ENCODE measurements at regions of chr20 and their contacts with region 1.

Region 1: DNA sequence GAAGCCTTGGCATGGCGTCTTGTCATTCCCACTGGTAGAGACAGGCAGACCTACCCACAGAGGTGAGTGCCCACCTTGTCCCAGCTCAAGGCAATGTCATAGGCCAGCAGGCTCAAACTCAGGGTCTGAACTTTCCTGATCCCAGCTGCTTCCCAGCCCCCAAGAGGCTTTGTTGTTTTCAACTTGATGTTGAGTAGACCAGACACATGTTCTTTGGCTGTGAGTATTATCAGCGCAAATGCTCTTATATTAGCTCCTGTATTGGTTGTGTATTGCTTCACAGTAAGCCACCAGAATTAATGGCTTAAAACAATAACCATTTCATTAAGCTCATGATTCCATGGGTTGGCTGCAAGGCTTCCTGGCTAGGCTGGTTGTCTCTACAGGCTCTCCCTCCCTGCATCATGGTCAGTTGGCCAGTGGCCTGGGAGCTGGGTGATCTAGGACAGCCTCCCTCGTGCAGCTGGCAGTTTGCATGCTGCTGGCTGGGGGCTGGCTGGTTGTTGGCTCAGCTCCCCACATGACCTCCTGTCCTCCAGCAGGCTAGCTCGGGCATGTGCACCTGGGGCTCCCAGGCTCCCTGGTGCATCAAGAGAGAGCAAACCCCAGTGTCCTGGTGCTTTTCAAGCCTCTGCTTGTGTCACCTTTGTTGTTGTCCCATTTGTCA is 21.6 kb downstream of the TOX2 start:
- DNase-seq: no peak
- ATAC-seq: no peak
- H3K4me3 ChIP-seq: no peak overlapping the region
- H3K4me3 Mint-ChIP-seq: no peak overlapping the region
- H3K27ac ChIP-seq: no peak overlapping the region
- H3K27ac Mint-ChIP-seq: no peak overlapping the region
- H3K4me1 ChIP-seq: peaks cover 30% of the 10 kb centered on the region
- H3K4me1 Mint-ChIP-seq: peaks cover 43% of the 10 kb centered on the region
- H3K27me3 ChIP-seq: peaks cover 0 to 4% of the 10 kb centered on the region in 2 experiments
- H3K27me3 Mint-ChIP-seq: no peaks in the 10 kb centered on the region
- CTCF ChIP-seq: no peak

Region 2: DNA sequence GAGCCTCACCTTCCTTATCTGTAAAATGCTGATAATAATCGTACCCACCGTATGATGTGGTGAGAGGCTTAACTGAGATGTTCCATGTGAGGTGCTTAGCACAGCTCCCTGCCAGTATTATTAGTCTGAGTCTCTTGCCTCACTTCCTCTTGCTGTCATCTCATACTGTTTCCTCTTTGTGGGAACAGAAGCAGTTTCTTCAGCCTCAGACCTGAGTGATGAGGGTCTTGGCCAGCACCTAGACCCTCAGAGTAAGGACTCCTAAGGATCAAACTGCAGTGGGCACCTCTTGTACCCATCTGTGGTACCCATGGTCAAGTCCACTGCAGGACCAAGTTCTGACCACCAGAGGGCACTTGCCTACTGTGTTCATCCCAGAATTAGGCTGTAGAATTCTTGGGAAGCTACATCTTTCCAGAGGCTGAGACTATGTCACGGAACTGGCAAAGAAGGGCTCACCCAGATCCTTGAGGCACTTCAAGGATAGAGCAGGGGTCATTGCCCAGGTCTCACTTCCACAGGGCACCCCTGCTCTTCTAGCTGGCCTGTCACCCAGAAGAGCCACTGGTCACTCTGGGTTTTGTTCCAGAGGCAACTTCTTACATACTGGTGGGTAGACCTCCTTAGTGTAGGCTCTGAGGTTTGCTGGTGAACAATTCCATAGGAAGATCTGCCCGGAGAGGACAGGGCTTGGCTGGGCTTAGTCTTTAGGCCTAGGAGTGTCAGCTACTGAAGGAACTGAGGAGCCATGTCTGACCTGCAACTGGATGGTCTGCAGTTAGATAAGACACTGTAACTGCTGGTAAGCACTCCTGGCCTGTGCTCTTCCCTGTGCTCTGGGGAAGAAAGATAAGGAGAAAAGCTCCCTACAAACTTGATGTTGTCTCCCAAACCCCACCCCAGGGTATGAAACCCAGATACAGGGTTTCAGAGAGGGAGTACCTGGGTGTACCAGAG is 398.0 kb before region 1 on chr20:
- CTCF ChIA-PET with region 1: no interaction called
- POLR2A ChIA-PET with region 1: no interaction called
- intact Hi-C with region 1: no loop called
- DNase-seq: peak; percentile 16 to 62 (median 30)
- ATAC-seq: peak; percentile 56
- H3K4me3 ChIP-seq: no peak overlapping the region
- H3K4me3 Mint-ChIP-seq: no peak overlapping the region
- H3K27ac ChIP-seq: no peak overlapping the region
- H3K27ac Mint-ChIP-seq: no peak overlapping the region
- H3K4me1 ChIP-seq: no peaks in the 10 kb centered on the region
- H3K4me1 Mint-ChIP-seq: no peaks in the 10 kb centered on the region
- H3K27me3 ChIP-seq: no peaks in the 10 kb centered on the region
- H3K27me3 Mint-ChIP-seq: no peaks in the 10 kb centered on the region
- CTCF ChIP-seq: peak; percentile 92

Region 3: GRCh38 chr20:43749734-43750294 is 186.4 kb before region 1 on chr20:
- CTCF ChIA-PET with region 1: no interaction called
- POLR2A ChIA-PET with region 1: no interaction called
- intact Hi-C with region 1: no loop called
- DNase-seq: peak; percentile 54 to 92 (median 80)
- ATAC-seq: peak; percentile 84
- H3K4me3 ChIP-seq: no peak overlapping the region
- H3K4me3 Mint-ChIP-seq: no peak overlapping the region
- H3K27ac ChIP-seq: no peak overlapping the region
- H3K27ac Mint-ChIP-seq: no peak overlapping the region
- H3K4me1 ChIP-seq: peaks cover 33% of the 10 kb centered on the region
- H3K4me1 Mint-ChIP-seq: peaks cover 30% of the 10 kb centered on the region
- H3K27me3 ChIP-seq: no peaks in the 10 kb centered on the region
- H3K27me3 Mint-ChIP-seq: no peaks in the 10 kb centered on the region
- CTCF ChIP-seq: peak; percentile 99

Region 4: DNA sequence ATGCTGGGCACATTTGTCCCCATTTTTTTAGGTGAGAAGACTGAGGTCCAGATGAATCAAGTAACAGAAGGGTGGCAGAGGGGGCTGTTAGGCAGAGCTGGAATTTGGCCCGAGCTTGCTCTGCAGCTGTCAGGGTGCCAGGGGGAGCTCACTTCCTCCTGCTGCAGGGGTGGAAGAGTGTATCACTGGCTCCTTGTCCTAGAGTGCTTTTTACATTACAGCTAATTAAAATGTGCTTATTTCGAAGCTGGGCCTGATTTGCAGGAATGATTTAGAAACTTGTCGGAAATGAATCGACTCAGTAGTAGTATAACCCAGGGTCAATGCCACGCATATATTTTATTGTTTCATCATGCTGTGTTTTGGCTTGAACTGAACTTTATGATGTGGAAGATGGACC is 10.4 kb before region 1 on chr20:
- CTCF ChIA-PET with region 1: interaction called, 6 read pairs
- POLR2A ChIA-PET with region 1: interaction called, 14 read pairs
- intact Hi-C with region 1: no loop called
- DNase-seq: peak in 8 of 14 experiments; percentile 9 to 56 (median 30)
- ATAC-seq: peak; percentile 75
- H3K4me3 ChIP-seq: no peak overlapping the region
- H3K4me3 Mint-ChIP-seq: peak overlapping the region; percentile 66
- H3K27ac ChIP-seq: no peak overlapping the region
- H3K27ac Mint-ChIP-seq: peak overlapping the region; percentile 43
- H3K4me1 ChIP-seq: peaks cover 49% of the 10 kb centered on the region
- H3K4me1 Mint-ChIP-seq: peaks cover 73% of the 10 kb centered on the region
- H3K27me3 ChIP-seq: peaks cover 0 to 3% of the 10 kb centered on the region in 2 experiments
- H3K27me3 Mint-ChIP-seq: peaks cover 5% of the 10 kb centered on the region
- CTCF ChIP-seq: no peak

Region 5: DNA sequence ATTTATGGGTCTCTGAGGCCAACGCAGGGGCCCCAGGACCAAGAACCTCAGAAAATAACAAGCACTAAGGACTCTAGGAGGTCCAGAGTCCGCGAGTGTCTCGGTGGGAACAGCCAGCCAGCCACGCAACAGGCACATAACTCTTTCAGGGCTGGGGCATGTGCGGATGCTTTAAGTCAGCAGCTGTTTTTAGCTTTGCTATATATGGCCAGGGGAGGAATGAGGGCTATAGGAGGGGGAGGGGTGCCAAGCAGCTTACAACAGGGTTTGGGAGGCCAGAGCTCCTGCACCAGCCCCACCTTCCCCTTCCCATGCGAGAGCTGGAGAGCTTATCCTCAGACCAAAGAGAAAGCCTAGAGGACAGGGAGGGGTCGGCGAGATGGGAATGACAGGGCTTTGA is 244.6 kb after region 1 on chr20:
- CTCF ChIA-PET with region 1: no interaction called
- POLR2A ChIA-PET with region 1: no interaction called
- intact Hi-C with region 1: no loop called
- DNase-seq: no peak
- ATAC-seq: no peak
- H3K4me3 ChIP-seq: no peak overlapping the region
- H3K4me3 Mint-ChIP-seq: no peak overlapping the region
- H3K27ac ChIP-seq: no peak overlapping the region
- H3K27ac Mint-ChIP-seq: no peak overlapping the region
- H3K4me1 ChIP-seq: no peaks in the 10 kb centered on the region
- H3K4me1 Mint-ChIP-seq: no peaks in the 10 kb centered on the region
- H3K27me3 ChIP-seq: peaks cover 20 to 27% of the 10 kb centered on the region in 2 experiments
- H3K27me3 Mint-ChIP-seq: peaks cover 72% of the 10 kb centered on the region
- CTCF ChIP-seq: no peak